PC-9 (cell line): ENCODE measurements at regions of chr20 and their contacts with region 1.

Region 1: GRCh38 chr20:14910126-14910525 is 572.7 kb upstream of the FLRT3 start:
- DNase-seq: no peak
- H3K4me3 ChIP-seq: no peak overlapping the region
- H3K27ac ChIP-seq: no peak overlapping the region
- H3K4me1 ChIP-seq: no peaks in the 10 kb centered on the region
- H3K27me3 ChIP-seq: no peaks in the 10 kb centered on the region
- CTCF ChIP-seq: no peak

Region 2: GRCh38 chr20:14700639-14700960 is 209.5 kb before region 1 on chr20:
- CTCF ChIA-PET with region 1: no interaction called
- POLR2A ChIA-PET with region 1: interaction called, 11 read pairs
- intact Hi-C with region 1: no loop called
- DNase-seq: no peak
- H3K4me3 ChIP-seq: no peak overlapping the region
- H3K27ac ChIP-seq: no peak overlapping the region
- H3K4me1 ChIP-seq: no peaks in the 10 kb centered on the region
- H3K27me3 ChIP-seq: no peaks in the 10 kb centered on the region
- CTCF ChIP-seq: no peak